ENCODE measurements at regions of chr15 and their contacts with region 1.

Region 1: DNA sequence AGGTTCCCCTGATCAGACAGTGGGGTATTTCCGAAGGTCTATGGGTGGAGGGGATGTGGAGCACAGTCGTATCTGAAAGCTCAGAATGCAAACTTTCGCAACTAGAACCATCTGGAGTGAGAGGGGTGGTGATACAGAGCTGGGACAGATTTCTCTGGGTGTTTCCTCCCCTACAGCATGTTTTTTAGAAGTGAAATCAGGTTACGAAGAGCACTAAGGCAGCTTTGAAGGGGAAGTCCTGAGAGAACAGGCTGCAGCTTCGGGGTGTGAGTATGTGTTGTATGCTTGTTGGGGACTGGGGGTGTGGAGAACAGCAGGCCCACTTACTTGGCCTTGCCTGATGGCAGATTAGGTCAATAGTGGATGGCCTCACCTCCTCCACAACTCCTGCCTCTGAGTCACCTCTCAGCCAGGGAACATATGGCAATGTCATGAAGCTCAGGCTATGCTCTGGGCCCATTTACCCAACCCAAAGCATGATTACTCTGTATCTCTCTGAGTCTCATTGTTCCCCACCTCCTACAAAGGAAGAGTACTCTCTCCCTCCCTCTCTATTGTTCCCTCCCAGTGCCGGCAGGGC is 107.2 kb upstream of the RASGRP1 start:
- DNase-seq: peak; percentile 36 to 90
- ATAC-seq: peak; percentile 54 to 71 (median 61)
- H3K4me3 ChIP-seq: no peak overlapping the region
- H3K4me3 Mint-ChIP-seq: peak overlapping the region; percentile 8
- H3K27ac ChIP-seq: peak overlapping the region; percentile 98
- H3K27ac Mint-ChIP-seq: peak overlapping the region; percentile 97 to 98
- H3K4me1 ChIP-seq: peaks cover 50% of the 10 kb centered on the region
- H3K4me1 Mint-ChIP-seq: peaks cover 56 to 57% of the 10 kb centered on the region in 2 donors
- H3K27me3 ChIP-seq: no peaks in the 10 kb centered on the region
- H3K27me3 Mint-ChIP-seq: no peaks in the 10 kb centered on the region
- CTCF ChIP-seq: no peak

Region 2: GRCh38 chr15:38610748-38611147 is 61.0 kb before region 1 on chr15:
- intact Hi-C with region 1: loop called (anchors 5 kb)
- DNase-seq: peak in 1 of 2 donors; percentile 64
- ATAC-seq: peak; percentile 56 to 69 (median 66)
- H3K4me3 ChIP-seq: no peak overlapping the region
- H3K4me3 Mint-ChIP-seq: peak overlapping the region; percentile 87
- H3K27ac ChIP-seq: peak overlapping the region; percentile 60
- H3K27ac Mint-ChIP-seq: peak overlapping the region; percentile 85 to 88
- H3K4me1 ChIP-seq: peaks cover 35% of the 10 kb centered on the region
- H3K4me1 Mint-ChIP-seq: peaks cover 64 to 67% of the 10 kb centered on the region in 2 donors
- H3K27me3 ChIP-seq: no peaks in the 10 kb centered on the region
- H3K27me3 Mint-ChIP-seq: no peaks in the 10 kb centered on the region
- CTCF ChIP-seq: no peak

Region 3: DNA sequence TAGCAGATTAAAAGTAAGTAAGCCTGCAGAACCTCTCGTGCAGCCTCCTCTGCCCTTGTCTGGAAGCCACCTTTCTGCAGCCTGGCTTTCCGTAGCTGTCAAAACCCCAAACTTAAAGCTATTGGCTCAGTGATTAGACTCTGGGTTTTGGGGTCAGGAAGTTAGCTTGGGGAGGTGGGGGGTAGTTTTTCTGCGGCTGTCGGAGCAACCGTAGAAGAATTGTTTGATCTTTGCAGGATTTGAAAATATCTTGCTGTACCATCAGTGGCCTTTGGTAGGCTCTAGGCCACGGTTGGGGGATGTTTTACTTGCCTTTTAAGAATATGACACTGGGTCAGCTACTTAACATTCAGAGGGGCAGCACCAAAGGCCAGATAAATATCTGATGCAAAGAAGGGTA is 18.8 kb before region 1 on chr15:
- intact Hi-C with region 1: loop called (anchors 1 kb)
- DNase-seq: peak; percentile 70 to 95
- ATAC-seq: peak; percentile 77 to 89 (median 84)
- H3K4me3 ChIP-seq: no peak overlapping the region
- H3K4me3 Mint-ChIP-seq: peak overlapping the region; percentile 89
- H3K27ac ChIP-seq: peak overlapping the region; percentile 75
- H3K27ac Mint-ChIP-seq: peak overlapping the region; percentile 95 to 96
- H3K4me1 ChIP-seq: peaks cover 45% of the 10 kb centered on the region
- H3K4me1 Mint-ChIP-seq: peaks cover 65 to 66% of the 10 kb centered on the region in 2 donors
- H3K27me3 ChIP-seq: no peaks in the 10 kb centered on the region
- H3K27me3 Mint-ChIP-seq: no peaks in the 10 kb centered on the region
- CTCF ChIP-seq: peak; percentile 27

Region 4: GRCh38 chr15:38699633-38700230 is 28.0 kb after region 1 on chr15:
- intact Hi-C with region 1: loop called (anchors 1 kb)
- DNase-seq: peak; percentile 50 to 90
- ATAC-seq: peak; percentile 49 to 72 (median 51)
- H3K4me3 ChIP-seq: no peak overlapping the region
- H3K4me3 Mint-ChIP-seq: peak overlapping the region; percentile 4
- H3K27ac ChIP-seq: no peak overlapping the region
- H3K27ac Mint-ChIP-seq: peak overlapping the region; percentile 41 to 59
- H3K4me1 ChIP-seq: peaks cover 26% of the 10 kb centered on the region
- H3K4me1 Mint-ChIP-seq: peaks cover 36 to 39% of the 10 kb centered on the region in 2 donors
- H3K27me3 ChIP-seq: no peaks in the 10 kb centered on the region
- H3K27me3 Mint-ChIP-seq: no peaks in the 10 kb centered on the region
- CTCF ChIP-seq: peak; percentile 85

Region 5: GRCh38 chr15:39154227-39154638 is 482.5 kb after region 1 on chr15:
- intact Hi-C with region 1: no loop called
- DNase-seq: no peak
- ATAC-seq: no peak
- H3K4me3 ChIP-seq: no peak overlapping the region
- H3K4me3 Mint-ChIP-seq: no peak overlapping the region
- H3K27ac ChIP-seq: no peak overlapping the region
- H3K27ac Mint-ChIP-seq: no peak overlapping the region
- H3K4me1 ChIP-seq: no peaks in the 10 kb centered on the region
- H3K4me1 Mint-ChIP-seq: no peaks in the 10 kb centered on the region
- H3K27me3 ChIP-seq: peaks cover 4% of the 10 kb centered on the region
- H3K27me3 Mint-ChIP-seq: peaks cover 5 to 25% of the 10 kb centered on the region in 2 donors
- CTCF ChIP-seq: no peak